Right ventricle myocardium inferior (tissue), 1 donor: ENCODE measurements at regions of chr17 and their contacts with region 1.

Region 1: GRCh38 chr17:64506576-64507477 is at the start of gene CEP95:
- DNase-seq: peak; percentile 95
- ATAC-seq: peak; percentile 85
- total RNA-seq, gene CEP95: 14.7 TPM

Region 2: DNA sequence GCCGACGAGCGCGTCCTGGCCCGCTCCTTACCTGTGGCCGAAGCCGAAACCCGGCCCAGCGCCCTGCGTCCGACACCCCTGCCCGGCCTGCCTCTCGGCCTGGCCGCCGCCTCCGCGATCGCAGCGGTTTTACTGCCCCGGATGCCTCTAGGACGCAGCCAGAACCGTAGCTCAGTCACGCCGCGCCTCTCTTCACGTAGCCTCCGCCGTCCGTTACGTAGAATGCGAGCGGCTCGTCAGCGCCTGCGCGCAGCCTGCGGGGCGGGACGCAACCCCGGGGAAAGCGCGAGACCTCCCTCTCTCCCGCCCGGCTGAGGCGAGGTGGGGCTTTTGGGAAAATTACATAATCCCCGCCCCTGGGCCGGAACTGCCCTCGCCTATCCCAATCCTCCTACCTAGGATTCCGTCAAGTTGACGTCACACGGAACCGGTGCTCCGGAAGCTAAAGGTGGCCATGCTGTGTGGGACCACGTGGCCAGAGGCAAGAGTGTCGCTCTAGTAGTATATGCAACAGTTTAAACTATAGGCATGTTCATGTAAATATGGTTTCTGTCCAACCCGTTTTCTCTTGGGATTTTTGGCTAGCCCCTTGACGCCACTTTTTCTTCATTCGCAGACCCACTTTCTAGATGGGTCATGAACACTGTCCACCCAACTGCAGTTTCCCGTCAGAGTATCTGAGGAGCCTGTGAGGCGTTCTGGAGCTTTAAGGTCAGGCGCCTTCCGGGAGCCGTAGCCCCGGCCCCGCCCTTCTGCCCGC is 733.3 kb before region 1 on chr17 and contains the start of gene CCDC47:
- intact Hi-C with region 1: loop called (anchors 5 kb)
- DNase-seq: peak; percentile 98
- ATAC-seq: peak; percentile 97
- total RNA-seq, gene CCDC47: 90.5 TPM

Region 3: DNA sequence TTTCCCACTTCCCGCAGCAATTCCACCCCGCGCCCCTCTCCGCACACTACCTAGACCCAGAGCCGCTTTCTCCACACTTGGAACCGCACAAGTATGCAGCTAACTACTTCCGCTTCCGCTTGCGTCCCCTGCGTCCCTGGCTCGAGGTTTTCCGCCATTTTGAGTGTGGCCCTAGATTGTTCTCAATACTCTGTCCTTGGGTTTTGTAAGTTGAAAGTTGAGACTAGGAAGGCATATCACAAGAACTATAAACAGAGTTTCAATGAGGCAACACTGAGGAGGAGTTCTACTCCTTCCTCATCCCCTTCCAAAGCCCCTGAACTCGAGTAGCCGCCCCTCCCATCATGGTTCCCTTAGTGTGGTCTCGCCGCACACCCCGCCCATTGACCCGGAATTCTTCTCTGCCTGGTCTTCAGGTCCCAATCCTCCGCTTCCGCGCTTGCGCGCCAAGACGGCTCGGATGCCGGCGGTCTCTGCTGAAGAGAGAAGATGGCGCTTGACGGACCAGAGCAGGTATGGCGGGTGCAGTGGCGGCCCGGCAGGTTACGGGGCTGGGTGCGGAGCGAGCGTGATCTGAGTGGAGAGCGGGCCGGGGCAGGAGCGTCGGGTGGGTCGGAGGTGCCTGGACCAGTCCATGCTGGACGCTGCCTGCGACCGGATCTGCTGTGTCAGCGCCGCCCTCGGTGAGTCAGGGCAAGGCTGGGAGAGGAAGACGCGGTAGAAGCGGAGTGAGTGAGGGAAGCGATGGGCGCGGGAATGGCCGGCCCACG is 679.6 kb before region 1 on chr17 and contains the starts of genes FTSJ3 and PSMC5:
- intact Hi-C with region 1: loop called (anchors 10 kb)
- DNase-seq: peak; percentile 98
- ATAC-seq: peak; percentile 94
- total RNA-seq, gene FTSJ3: 34.2 TPM
- total RNA-seq, gene PSMC5: 145 TPM

Region 4: GRCh38 chr17:64460955-64461354 is 45.9 kb before region 1 on chr17:
- intact Hi-C with region 1: no loop called
- DNase-seq: no peak
- ATAC-seq: peak; percentile 62

Region 5: DNA sequence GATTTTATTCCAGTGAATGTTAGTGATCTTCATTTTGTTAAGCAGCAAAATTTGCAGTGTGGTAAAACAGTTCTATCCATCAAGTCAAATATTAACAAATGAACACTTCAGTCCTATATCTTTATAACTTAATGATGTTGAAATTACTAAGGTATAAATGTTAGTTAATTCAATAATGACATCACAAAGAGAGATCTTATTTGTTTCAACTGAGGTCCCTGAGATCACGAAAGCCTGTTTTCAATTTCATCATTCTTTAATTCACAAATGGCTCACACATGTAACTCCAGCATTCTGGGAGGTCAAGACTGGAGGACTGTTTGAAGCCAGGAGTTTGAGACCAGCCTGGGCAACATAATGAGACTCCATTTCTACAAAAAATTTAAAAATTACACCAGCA is 141.4 kb after region 1 on chr17:
- intact Hi-C with region 1: loop called (anchors 10 kb)
- DNase-seq: no peak
- ATAC-seq: no peak